Activated CD8-positive, alpha-beta memory T cell treated with anti-CD3 and anti-CD28 coated beads, Interleukin-2, amount 10 ng/mL, durations not matched to agents 7 days and 5 days (primary cell): ENCODE measurements at regions of chr2 and their contacts with region 1.

Region 1: GRCh38 chr2:101328474-101329007 is 20.0 kb upstream of the RNF149 start:
- DNase-seq: peak; percentile 81
- ATAC-seq: peak; percentile 90
- H3K4me3 Mint-ChIP-seq: no peak overlapping the region
- H3K27ac Mint-ChIP-seq: no peak overlapping the region
- H3K4me1 Mint-ChIP-seq: peaks cover 3% of the 10 kb centered on the region
- H3K27me3 Mint-ChIP-seq: no peaks in the 10 kb centered on the region

Region 2: DNA sequence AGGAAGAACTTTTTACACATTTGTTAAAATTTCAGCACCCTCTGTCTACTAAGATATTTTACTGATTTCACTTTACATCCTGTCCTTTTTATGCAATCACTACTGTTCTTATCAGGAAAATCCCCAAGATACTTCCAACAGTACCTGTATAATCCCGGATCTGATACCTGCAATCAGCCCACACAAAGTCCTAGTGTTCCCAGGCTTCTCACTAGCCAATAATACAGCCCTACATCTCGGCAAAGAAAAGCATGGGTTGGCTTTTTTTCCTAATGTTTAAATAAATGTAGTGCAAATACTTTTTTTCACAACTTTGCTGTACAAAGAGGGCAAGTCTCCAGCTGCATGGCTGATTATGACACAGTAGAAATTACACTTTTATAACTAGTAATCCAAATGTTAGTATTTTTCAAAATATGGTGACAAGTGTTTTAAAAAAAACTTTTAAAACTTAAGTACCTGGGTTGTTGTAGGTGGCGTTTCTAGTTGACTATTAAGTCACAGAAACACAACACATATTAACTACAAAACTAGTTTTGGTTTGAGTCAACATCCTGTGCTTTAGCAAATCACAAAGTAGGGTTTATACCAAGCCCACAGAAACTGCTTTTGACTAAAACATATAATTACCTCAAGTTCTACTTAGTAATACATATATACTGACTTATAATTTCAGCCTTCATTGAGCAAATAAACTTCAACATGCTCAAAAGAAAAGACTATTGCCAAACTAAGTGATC is 56.3 kb before region 1 on chr2:
- CTCF ChIA-PET with region 1: no interaction called
- DNase-seq: no peak
- ATAC-seq: peak; percentile 94
- H3K4me3 Mint-ChIP-seq: peak overlapping the region; percentile 15
- H3K27ac Mint-ChIP-seq: peak overlapping the region; percentile 82
- H3K4me1 Mint-ChIP-seq: peaks cover 60% of the 10 kb centered on the region
- H3K27me3 Mint-ChIP-seq: no peaks in the 10 kb centered on the region

Region 3: GRCh38 chr2:101308432-101309210 is 19.9 kb before region 1 on chr2 and contains the start of gene RNF149:
- CTCF ChIA-PET with region 1: interaction called, 17 read pairs
- DNase-seq: peak; percentile 92
- ATAC-seq: peak; percentile 75
- H3K4me3 Mint-ChIP-seq: peak within 1 kb of the TSS; percentile 94
- H3K27ac Mint-ChIP-seq: peak within 1 kb of the TSS; percentile 97
- H3K4me1 Mint-ChIP-seq: peaks cover 61% of the 10 kb centered on the region
- H3K27me3 Mint-ChIP-seq: no peaks in the 10 kb centered on the region
- total RNA-seq, gene RNF149: 72.3 to 100 TPM

Region 4: DNA sequence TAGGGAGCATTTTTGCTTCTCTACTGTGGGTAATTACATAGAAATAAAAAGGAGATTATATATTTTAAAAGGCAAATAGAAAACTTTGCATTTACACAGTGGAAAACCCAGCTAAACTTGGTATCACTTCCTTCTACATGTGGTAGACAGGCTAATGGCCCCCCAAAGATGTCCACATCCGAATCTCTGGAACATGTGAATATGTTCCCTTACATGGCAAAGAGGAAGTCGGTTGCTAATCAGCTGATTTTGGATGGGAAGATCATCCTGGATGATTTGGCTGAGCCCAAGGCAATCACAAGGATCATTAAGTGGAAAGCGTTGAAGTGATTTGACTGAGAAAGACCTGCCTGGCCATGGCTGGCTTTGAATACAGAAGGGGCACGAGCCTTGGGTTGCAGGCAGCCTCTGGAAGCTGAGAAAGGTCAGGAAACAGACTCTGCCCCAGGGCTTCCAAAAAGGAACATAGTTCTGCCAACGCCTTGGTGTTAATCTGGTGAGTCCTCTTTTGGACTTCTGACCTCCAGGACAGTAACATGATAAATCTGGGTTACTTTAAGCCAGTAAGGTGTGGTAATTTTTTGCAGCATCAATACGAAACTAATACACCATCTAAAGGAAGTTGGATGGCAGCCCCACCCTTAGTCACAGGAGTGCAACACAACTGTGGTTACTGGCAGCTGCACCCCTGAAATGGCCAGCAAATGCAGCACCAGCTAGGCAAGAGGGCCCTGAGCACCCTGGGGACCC is 32.8 kb after region 1 on chr2:
- CTCF ChIA-PET with region 1: interaction called, 13 read pairs
- DNase-seq: peak; percentile 82
- ATAC-seq: peak; percentile 92
- H3K4me3 Mint-ChIP-seq: peak overlapping the region; percentile 3
- H3K27ac Mint-ChIP-seq: peak overlapping the region; percentile 69
- H3K4me1 Mint-ChIP-seq: peaks cover 28% of the 10 kb centered on the region
- H3K27me3 Mint-ChIP-seq: no peaks in the 10 kb centered on the region

Region 5: DNA sequence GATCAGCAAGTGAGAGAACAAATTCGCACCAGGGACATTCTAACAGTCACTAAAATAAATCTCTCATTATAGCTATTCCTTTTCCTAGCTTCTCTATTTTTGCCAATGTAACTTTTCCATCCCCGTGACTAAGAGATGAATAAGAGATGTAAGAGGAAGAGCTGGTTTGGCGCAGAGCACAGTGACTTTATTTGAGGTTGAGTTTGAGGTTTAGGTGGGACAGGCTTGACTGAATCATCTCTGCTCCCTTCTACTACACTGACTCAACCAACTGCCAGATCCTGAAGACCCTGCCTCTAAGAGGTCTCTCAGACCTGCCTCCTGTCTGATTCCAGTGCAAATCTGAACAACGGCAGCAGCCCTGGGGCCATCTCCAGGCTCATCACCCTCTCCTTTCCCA is 118.3 kb after region 1 on chr2:
- CTCF ChIA-PET with region 1: no interaction called
- DNase-seq: no peak
- ATAC-seq: no peak
- H3K4me3 Mint-ChIP-seq: no peak overlapping the region
- H3K27ac Mint-ChIP-seq: no peak overlapping the region
- H3K4me1 Mint-ChIP-seq: peaks cover 19% of the 10 kb centered on the region
- H3K27me3 Mint-ChIP-seq: peaks cover 7% of the 10 kb centered on the region